Sigmoid colon (tissue), 7 donors: ENCODE measurements at regions of chr7 and their contacts with region 1.

Region 1: GRCh38 chr7:23474094-23474828 is 4.0 kb upstream of the IGF2BP3 start:
- DNase-seq: peak; percentile 81
- H3K4me3 ChIP-seq: peak overlapping the region in 3 of 4 donors; percentile 6 to 21 (median 20)
- H3K27ac ChIP-seq: no peak overlapping the region
- H3K4me1 ChIP-seq: peaks cover 0 to 37% (median 36%) of the 10 kb centered on the region in 4 donors
- H3K27me3 ChIP-seq: peaks cover 74 to 100% (median 99%) of the 10 kb centered on the region in 3 donors
- CTCF ChIP-seq: no peak
- EP300 ChIP-seq: no peak
- POLR2A ChIP-seq: no peak

Region 2: GRCh38 chr7:23531794-23532489 is 57.7 kb after region 1 on chr7 and contains the start of gene TRA2A:
- intact Hi-C with region 1: loop called (anchors 10 kb)
- DNase-seq: peak; percentile 99
- H3K4me3 ChIP-seq: peak within 1 kb of the TSS; percentile 72 to 82 (median 74)
- H3K27ac ChIP-seq: peak within 1 kb of the TSS; percentile 92 to 97 (median 94)
- H3K4me1 ChIP-seq: peaks cover 0 to 35% (median 33%) of the 10 kb centered on the region in 4 donors
- H3K27me3 ChIP-seq: no peaks in the 10 kb centered on the region
- CTCF ChIP-seq: no peak
- EP300 ChIP-seq: no peak
- POLR2A ChIP-seq: peak; percentile 88 to 89
- total RNA-seq, gene TRA2A: 37.0 to 84.5 (median 42.2) TPM

Region 3: GRCh38 chr7:24572997-24573625 is 1098.8 kb after region 1 on chr7 and contains the start of gene PALS2:
- intact Hi-C with region 1: loop called (anchors 10 kb)
- DNase-seq: peak; percentile 80
- H3K4me3 ChIP-seq: peak within 1 kb of the TSS; percentile 71 to 85 (median 79)
- H3K27ac ChIP-seq: peak within 1 kb of the TSS; percentile 77 to 87 (median 82)
- H3K4me1 ChIP-seq: peaks cover 0 to 14% (median 9%) of the 10 kb centered on the region in 4 donors
- H3K27me3 ChIP-seq: no peaks in the 10 kb centered on the region
- CTCF ChIP-seq: no peak
- EP300 ChIP-seq: no peak
- POLR2A ChIP-seq: no peak
- total RNA-seq, gene PALS2: 6.9 to 14.2 (median 7.7) TPM